Dorsolateral prefrontal cortex (tissue), 120 donors: ENCODE measurements at regions of chr3 and their contacts with region 1.

Region 1: DNA sequence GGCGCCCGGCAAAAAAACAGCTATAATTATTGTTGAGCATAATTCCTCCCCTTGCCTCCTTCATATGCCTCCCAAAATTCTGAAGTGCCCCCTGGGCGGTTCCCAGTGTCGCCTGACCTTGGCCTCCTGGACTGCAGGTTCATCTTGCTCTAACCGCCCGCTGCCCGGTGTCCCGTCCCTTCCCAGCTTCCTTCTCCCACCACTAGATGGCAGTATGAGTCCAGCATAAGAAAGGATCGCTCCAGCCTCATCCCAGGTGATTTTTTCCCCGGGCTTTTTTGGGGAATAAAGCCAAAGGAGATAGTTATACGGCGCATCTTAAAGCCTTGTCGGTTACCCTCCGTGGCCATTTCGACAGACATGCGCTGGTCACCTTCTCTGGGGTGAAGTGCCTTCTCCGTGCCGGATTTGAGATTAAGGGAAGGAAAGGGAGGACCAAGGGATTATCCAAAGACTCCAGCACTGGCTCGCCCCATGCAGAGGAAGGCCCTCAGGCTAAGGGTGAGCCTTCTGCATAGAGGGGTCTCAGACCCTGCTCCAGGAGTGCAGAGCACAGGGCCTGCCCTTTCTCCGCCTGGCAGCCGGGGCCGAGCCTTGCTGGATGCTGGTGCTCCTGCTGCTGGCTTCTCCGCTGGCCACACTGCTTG is 45.8 kb upstream of the TRA2B start:
- DNase-seq: peak; percentile 44 to 84 (median 72)
- H3K4me3 ChIP-seq: peak overlapping the region; percentile 10 to 67 (median 44)
- H3K27ac ChIP-seq: peak overlapping the region in 6 of 59 donors; percentile 5 to 66 (median 54)
- H3K27me3 ChIP-seq: no peaks in the 10 kb centered on the region
- CTCF ChIP-seq: peak; percentile 77 to 99 (median 96)

Region 2: GRCh38 chr3:186044973-186045372 is 61.4 kb after region 1 on chr3:
- intact Hi-C with region 1: loop called in 1 of 2 experiments (anchors 2 kb)
- DNase-seq: peak in 9 of 10 donors; percentile 44 to 84 (median 70)
- H3K4me3 ChIP-seq: peak overlapping the region in 52 of 59 donors; percentile 3 to 60 (median 35)
- H3K27ac ChIP-seq: peak overlapping the region in 56 of 59 donors; percentile 0 to 93 (median 82)
- H3K27me3 ChIP-seq: no peaks in the 10 kb centered on the region
- CTCF ChIP-seq: peak in 30 of 56 donors; percentile 10 to 55 (median 30)

Region 3: DNA sequence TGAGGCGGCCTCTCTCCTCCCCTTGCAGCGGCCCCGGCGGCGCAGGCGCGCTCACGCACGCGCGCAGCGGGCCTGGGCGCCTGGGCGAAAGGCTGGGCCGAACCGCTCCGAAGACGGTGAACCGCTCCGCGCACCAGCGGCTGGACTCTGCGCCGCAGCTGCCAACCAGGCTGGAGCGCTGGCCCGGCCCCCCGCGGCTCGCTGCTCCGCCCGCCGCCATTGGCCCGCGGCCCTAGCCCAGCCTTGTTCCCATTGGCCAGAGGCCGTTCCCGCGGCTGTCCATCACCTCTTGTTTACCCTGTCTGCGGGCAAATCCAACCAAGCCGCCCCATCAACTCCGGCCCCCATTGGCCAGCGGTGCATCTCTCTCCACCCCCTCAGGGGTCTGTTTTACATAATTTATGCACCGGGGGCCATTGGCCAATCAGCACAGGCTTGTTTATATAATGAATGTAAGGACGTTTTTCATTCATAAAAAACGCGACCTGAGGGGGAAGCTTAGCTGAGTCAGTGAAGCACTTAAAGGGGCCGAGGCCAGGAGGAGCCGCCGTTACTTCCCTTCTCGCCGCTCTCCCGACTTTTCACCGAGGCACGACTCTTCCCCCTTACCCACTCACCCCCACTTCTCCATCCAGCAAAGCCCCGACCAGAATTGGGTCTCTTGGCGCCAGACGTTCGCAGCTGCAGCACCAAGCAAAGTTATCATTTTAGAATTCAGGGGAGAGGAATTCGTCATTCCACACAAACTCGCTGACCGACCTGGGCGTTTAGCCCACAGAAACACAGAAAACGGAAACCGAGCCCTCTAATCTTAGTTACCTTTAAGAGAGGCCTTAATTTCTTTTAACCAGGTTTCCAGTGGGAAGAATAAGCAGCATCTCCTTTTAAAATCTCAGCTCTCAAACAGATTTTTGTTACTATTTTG is 125.6 kb after region 1 on chr3 and contains the start of gene ETV5:
- intact Hi-C with region 1: loop called (anchors 2 to 5 kb)
- DNase-seq: peak; percentile 99 to 100 (median 100)
- H3K4me3 ChIP-seq: peak within 1 kb of the TSS; percentile 66 to 96 (median 83)
- H3K27ac ChIP-seq: peak within 1 kb of the TSS in 57 of 59 donors; percentile 11 to 93 (median 81)
- H3K27me3 ChIP-seq: peaks cover 0 to 2% (median 0%) of the 10 kb centered on the region in 45 donors
- CTCF ChIP-seq: peak in 17 of 56 donors; percentile 1 to 41 (median 17)
- total RNA-seq, gene ETV5: 21.0 to 97.9 (median 44.5) TPM

Region 4: DNA sequence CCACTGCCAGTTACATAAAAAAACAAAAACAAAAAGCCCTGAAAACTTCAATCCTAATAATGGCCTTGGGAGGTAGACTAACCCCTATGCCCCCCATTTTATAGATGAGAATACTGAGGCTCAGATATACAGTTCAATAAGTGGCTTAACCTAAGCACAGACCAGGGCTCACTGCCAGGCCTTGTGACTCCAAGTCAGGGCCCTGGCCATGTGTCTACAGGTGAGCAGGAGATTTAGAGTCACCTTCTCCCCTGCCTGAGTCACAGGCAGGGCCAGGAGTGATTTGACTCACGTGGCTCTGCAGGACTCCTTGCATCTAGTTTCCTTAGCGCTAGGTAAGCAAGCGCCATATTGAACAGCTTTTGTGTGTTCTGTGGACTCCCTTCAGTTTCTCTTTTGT is 223.9 kb after region 1 on chr3:
- intact Hi-C with region 1: no loop called
- DNase-seq: no peak
- H3K4me3 ChIP-seq: no peak overlapping the region
- H3K27ac ChIP-seq: peak overlapping the region in 21 of 59 donors; percentile 5 to 96 (median 56)
- H3K27me3 ChIP-seq: no peaks in the 10 kb centered on the region
- CTCF ChIP-seq: no peak

Region 5: GRCh38 chr3:186217820-186218164 is 234.2 kb after region 1 on chr3:
- intact Hi-C with region 1: loop called (anchors 5 kb)
- DNase-seq: no peak
- H3K4me3 ChIP-seq: no peak overlapping the region
- H3K27ac ChIP-seq: peak overlapping the region in 33 of 59 donors; percentile 1 to 70 (median 41)
- H3K27me3 ChIP-seq: no peaks in the 10 kb centered on the region
- CTCF ChIP-seq: no peak

Region 6: GRCh38 chr3:186241910-186242821 is 258.5 kb after region 1 on chr3:
- intact Hi-C with region 1: loop called (anchors 1 to 2 kb)
- DNase-seq: peak in 9 of 10 donors; percentile 37 to 75 (median 68)
- H3K4me3 ChIP-seq: peak overlapping the region in 55 of 59 donors; percentile 5 to 69 (median 40)
- H3K27ac ChIP-seq: peak overlapping the region in 31 of 59 donors; percentile 1 to 77 (median 25)
- H3K27me3 ChIP-seq: no peaks in the 10 kb centered on the region
- CTCF ChIP-seq: peak in 53 of 56 donors; percentile 20 to 72 (median 57)

Region 7: GRCh38 chr3:186277268-186277909 is 293.8 kb after region 1 on chr3:
- intact Hi-C with region 1: loop called (anchors 2 to 10 kb)
- DNase-seq: peak in 3 of 10 donors; percentile 31 to 58 (median 54)
- H3K4me3 ChIP-seq: no peak overlapping the region
- H3K27ac ChIP-seq: peak overlapping the region in 1 of 59 donors; percentile 14
- H3K27me3 ChIP-seq: no peaks in the 10 kb centered on the region
- CTCF ChIP-seq: peak; percentile 15 to 77 (median 61)

Region 8: GRCh38 chr3:186540221-186540834 is 556.7 kb after region 1 on chr3:
- intact Hi-C with region 1: loop called (anchors 2 to 5 kb)
- DNase-seq: peak in 9 of 10 donors; percentile 62 to 93 (median 76)
- H3K4me3 ChIP-seq: peak overlapping the region in 35 of 59 donors; percentile 5 to 55 (median 32)
- H3K27ac ChIP-seq: peak overlapping the region in 6 of 59 donors; percentile 10 to 59 (median 20)
- H3K27me3 ChIP-seq: no peaks in the 10 kb centered on the region
- CTCF ChIP-seq: peak; percentile 67 to 96 (median 84)